ENCODE measurements at regions of chr19 and their contacts with region 1.

Region 1: DNA sequence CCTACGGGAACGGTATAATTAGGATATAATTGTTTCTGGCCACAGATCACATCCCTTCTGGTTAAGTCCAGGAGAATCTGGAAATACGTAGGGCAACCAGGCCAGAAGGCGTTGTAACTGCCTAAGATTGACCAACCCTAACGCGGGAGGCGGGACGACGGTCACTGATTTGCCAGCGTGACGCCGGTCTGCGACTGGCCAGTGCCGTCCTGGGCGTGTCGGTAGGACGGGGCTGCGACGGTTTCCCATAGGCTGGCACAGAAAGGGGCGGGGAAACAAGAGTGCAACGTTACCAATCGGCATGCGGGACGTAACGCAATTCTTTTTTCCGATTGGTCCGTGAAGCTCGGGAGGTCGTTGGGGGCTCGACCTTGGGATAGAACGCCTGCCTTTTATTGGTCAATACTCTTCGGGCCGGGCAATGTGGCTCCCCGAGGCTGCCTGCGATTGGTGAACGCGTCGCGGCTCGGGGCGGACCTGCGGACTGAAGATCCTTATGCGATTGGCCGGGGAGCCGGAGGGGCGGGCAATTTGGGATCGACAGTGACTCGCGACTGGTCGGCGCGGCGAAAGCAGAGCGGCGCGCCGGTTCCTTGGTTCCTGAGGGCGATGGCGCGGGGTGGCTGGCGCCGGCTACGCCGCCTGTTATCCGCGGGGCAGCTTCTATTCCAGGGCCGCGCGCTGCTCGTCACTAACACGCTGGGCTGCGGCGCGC is at the start of gene MPV17L2:
- DNase-seq: peak; percentile 100
- ATAC-seq: peak; percentile 93
- H3K4me3 ChIP-seq: peak within 1 kb of the TSS; percentile 63
- H3K27ac ChIP-seq: peak within 1 kb of the TSS; percentile 30
- H3K4me1 ChIP-seq: peaks cover 8% of the 10 kb centered on the region
- H3K27me3 ChIP-seq: no peaks in the 10 kb centered on the region
- CTCF ChIP-seq: no peak
- POLR2A ChIP-seq: peak; percentile 80
- RAD21 ChIP-seq: no peak
- total RNA-seq, gene MPV17L2: 7.2 TPM in 2 replicates

Region 2: GRCh38 chr19:18239303-18239702 is 46.5 kb after region 1 on chr19:
- CTCF ChIA-PET with region 1: no interaction called
- POLR2A ChIA-PET with region 1: no interaction called
- dilution Hi-C with region 1: no loop called
- in situ Hi-C with region 1: loop called (anchors 5 kb)
- intact Hi-C with region 1: no loop called
- DNase-seq: no peak
- ATAC-seq: peak; percentile 49; the same call in 1 of the 2 replicates
- H3K4me3 ChIP-seq: no peak overlapping the region
- H3K27ac ChIP-seq: no peak overlapping the region
- H3K4me1 ChIP-seq: no peaks in the 10 kb centered on the region
- H3K27me3 ChIP-seq: peaks cover 10% of the 10 kb centered on the region
- CTCF ChIP-seq: no peak
- POLR2A ChIP-seq: no peak
- RAD21 ChIP-seq: no peak

Region 3: GRCh38 chr19:18251587-18252369 is 58.9 kb after region 1 on chr19:
- CTCF ChIA-PET with region 1: interaction called, 6 read pairs
- POLR2A ChIA-PET with region 1: no interaction called
- dilution Hi-C with region 1: no loop called
- in situ Hi-C with region 1: no loop called
- intact Hi-C with region 1: loop called (anchors 1 kb)
- DNase-seq: peak; percentile 63
- ATAC-seq: peak; percentile 94
- H3K4me3 ChIP-seq: no peak overlapping the region
- H3K27ac ChIP-seq: no peak overlapping the region
- H3K4me1 ChIP-seq: no peaks in the 10 kb centered on the region
- H3K27me3 ChIP-seq: peaks cover 22% of the 10 kb centered on the region
- CTCF ChIP-seq: peak; percentile 93
- POLR2A ChIP-seq: 0 out of 2 replicates have a peak, but pooled peaks have one; percentile 48
- RAD21 ChIP-seq: peak; percentile 98

Region 4: DNA sequence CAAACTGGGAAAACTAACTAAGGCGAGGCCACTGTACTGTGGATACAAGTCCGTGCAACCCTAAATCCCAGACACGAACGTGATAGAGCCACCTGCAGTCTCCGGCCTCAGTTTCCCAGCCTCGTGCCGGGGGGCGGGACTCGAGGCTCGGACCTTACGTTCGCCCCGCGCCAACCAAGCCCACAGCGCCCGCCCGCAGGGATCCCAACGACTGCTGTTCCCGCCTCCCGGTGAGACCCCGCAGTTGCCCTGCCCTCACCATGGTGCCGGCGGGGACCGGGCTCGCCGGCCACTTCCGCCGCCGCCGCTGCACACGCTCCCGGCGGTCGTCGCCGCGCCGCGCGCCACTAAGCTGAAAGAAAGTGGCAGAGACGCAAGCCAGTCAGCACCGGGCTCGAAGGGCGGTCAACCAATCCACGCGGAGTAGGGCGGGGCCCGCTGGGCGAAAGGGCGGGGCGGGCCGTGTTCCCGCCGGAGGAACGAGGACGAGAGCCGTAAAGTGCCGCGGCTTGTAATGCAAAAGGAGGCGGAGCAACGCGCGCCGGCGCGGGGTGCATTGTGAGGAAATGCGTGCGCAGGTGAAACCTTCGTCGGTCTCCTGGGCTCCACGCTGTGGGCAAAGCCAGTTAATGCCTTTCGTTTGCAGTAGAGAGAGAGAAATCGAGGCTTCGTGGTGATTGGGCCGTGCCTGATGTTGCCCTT is 130.1 kb after region 1 on chr19 and contains the start of gene LSM4:
- CTCF ChIA-PET with region 1: no interaction called
- POLR2A ChIA-PET with region 1: no interaction called
- dilution Hi-C with region 1: no loop called
- in situ Hi-C with region 1: loop called (anchors 10 kb)
- intact Hi-C with region 1: no loop called
- DNase-seq: peak; percentile 95
- ATAC-seq: peak; percentile 98
- H3K4me3 ChIP-seq: peak within 1 kb of the TSS; percentile 77
- H3K27ac ChIP-seq: peak within 1 kb of the TSS; percentile 73
- H3K4me1 ChIP-seq: peaks cover 5% of the 10 kb centered on the region; the same call in 1 of the 2 replicates
- H3K27me3 ChIP-seq: no peaks in the 10 kb centered on the region
- CTCF ChIP-seq: peak; percentile 44
- POLR2A ChIP-seq: peak; percentile 54; the same call in 1 of the 2 replicates
- RAD21 ChIP-seq: peak; percentile 48
- total RNA-seq, gene LSM4: 44.8 and 88.0 TPM in 2 replicates

Region 5: DNA sequence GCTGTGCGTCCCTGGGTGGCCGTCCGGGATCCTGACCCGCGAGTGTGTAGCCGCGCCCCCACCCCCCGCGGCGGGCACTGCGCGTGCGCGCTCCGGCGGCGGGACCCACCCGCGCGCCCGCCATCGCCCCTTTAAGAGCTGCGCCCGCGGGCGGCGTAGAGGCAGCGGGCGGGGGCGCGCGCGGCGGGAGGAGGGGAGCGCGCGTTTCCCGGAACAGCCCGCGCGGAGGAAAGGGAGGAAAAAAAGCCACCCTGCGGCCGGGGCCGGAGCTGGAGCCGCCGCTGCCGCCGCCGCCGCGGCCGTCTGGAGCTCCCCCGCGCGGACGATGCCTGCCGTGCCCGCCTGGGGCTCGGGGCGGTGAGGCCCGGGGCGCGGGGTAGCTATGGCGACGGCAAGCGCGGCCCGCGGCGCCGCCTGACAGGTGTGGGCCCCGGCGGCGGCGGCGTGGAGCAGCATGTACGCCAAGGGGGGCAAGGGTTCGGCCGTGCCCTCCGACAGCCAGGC is 226.4 kb after region 1 on chr19 and contains the start of gene SSBP4:
- CTCF ChIA-PET with region 1: no interaction called
- POLR2A ChIA-PET with region 1: no interaction called
- dilution Hi-C with region 1: no loop called
- in situ Hi-C with region 1: loop called (anchors 10 kb)
- intact Hi-C with region 1: no loop called
- DNase-seq: peak; percentile 70
- ATAC-seq: peak; percentile 38
- H3K4me3 ChIP-seq: peak within 1 kb of the TSS; percentile 68
- H3K27ac ChIP-seq: peak within 1 kb of the TSS; percentile 90
- H3K4me1 ChIP-seq: peaks cover 37% of the 10 kb centered on the region
- H3K27me3 ChIP-seq: no peaks in the 10 kb centered on the region
- CTCF ChIP-seq: peak; percentile 50
- POLR2A ChIP-seq: peak; percentile 38
- RAD21 ChIP-seq: peak; percentile 24
- total RNA-seq, gene SSBP4: 13.3 and 14.9 TPM in 2 replicates